ENCODE measurements at regions of chr1 and their contacts with region 1.

Region 1: GRCh38 chr1:244272471-244273261 is 179.0 kb downstream of the ADSS2 start:
- DNase-seq: peak; percentile 97
- H3K4me3 Mint-ChIP-seq: peak overlapping the region; percentile 65
- H3K27ac Mint-ChIP-seq: peak overlapping the region; percentile 52
- H3K4me1 Mint-ChIP-seq: peaks cover 32% of the 10 kb centered on the region
- H3K27me3 Mint-ChIP-seq: no peaks in the 10 kb centered on the region
- CTCF ChIP-seq: peak; percentile 100

Region 2: GRCh38 chr1:243701872-243702271 is 570.8 kb before region 1 on chr1:
- CTCF ChIA-PET with region 1: interaction called, 44 read pairs
- POLR2A ChIA-PET with region 1: interaction called, 7 read pairs
- intact Hi-C with region 1: no loop called
- DNase-seq: no peak
- H3K4me3 Mint-ChIP-seq: no peak overlapping the region
- H3K27ac Mint-ChIP-seq: no peak overlapping the region
- H3K4me1 Mint-ChIP-seq: no peaks in the 10 kb centered on the region
- H3K27me3 Mint-ChIP-seq: no peaks in the 10 kb centered on the region
- CTCF ChIP-seq: no peak

Region 3: GRCh38 chr1:243748706-243749283 is 523.9 kb before region 1 on chr1:
- CTCF ChIA-PET with region 1: interaction called, 28 read pairs
- POLR2A ChIA-PET with region 1: interaction called, 4 read pairs
- intact Hi-C with region 1: loop called (anchors 1 kb)
- DNase-seq: peak; percentile 87
- H3K4me3 Mint-ChIP-seq: no peak overlapping the region
- H3K27ac Mint-ChIP-seq: no peak overlapping the region
- H3K4me1 Mint-ChIP-seq: no peaks in the 10 kb centered on the region
- H3K27me3 Mint-ChIP-seq: no peaks in the 10 kb centered on the region
- CTCF ChIP-seq: peak; percentile 88

Region 4: DNA sequence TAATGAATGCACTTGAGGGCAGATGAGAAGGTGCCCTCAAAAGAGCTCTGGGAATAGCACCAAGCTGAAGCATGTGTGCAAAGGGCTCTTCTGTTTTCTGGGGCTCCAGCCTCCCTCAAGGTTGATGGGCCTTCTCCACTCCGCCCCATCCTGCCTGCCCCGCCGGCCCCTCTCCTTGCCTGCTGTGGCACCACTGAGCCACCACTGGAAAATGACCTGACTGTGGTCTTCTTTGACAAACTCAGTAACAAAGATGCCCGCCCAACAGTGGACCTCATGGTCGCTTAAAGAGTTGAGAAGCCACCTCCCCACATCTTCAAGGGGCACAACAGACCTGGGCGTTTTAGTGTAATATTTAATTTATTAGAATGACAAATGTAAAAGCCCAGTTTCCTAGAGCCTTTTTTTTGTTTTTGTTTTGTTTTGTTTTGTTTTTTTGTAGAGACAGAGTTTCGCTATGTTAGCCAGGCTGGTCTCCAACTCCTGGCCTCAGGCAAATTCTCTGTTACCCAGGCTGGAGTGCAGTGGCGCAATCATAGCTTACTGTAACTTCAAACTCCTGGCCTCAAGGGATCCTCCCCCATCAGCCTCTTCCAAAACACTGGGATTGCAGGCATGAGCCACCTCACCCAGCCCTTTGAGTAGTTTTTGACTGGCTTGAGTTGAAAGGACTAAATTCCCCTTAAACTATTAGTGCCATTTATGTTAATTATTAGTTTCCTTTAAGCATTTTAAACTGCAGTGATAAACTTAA is 250.5 kb before region 1 on chr1:
- CTCF ChIA-PET with region 1: interaction called, 7 read pairs
- POLR2A ChIA-PET with region 1: no interaction called
- intact Hi-C with region 1: loop called (anchors 2 kb)
- DNase-seq: peak; percentile 98
- H3K4me3 Mint-ChIP-seq: no peak overlapping the region
- H3K27ac Mint-ChIP-seq: peak overlapping the region; percentile 73
- H3K4me1 Mint-ChIP-seq: peaks cover 12% of the 10 kb centered on the region
- H3K27me3 Mint-ChIP-seq: peaks cover 6% of the 10 kb centered on the region
- CTCF ChIP-seq: no peak

Region 5: DNA sequence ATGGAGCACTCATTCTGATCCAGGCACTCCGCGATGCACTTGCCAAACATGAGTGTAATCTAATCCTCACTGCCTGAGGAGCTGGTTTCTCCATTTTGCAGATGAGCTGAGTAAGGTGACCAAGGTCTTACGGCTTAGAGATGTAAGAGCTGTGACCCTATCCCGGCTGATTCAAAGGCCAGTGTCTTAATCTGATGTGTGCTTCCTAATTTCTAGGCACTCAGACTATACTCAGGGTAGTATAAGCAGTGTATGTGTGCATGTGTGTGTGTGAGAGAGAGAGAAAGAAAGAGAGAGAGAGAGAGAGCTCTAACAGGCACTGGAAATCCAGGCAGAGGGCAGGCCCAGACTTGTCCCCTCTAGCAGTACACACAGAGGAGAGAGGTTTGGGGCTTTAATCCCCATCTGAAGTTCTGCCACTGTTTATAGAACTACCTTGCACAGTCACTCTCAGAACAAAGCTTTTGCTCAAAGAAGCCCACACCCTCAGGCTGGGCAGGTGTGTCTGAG is 33.4 kb before region 1 on chr1:
- CTCF ChIA-PET with region 1: interaction called, 14 read pairs
- POLR2A ChIA-PET with region 1: interaction called, 5 read pairs
- intact Hi-C with region 1: no loop called
- DNase-seq: peak; percentile 95
- H3K4me3 Mint-ChIP-seq: no peak overlapping the region
- H3K27ac Mint-ChIP-seq: peak overlapping the region; percentile 91
- H3K4me1 Mint-ChIP-seq: peaks cover 7% of the 10 kb centered on the region
- H3K27me3 Mint-ChIP-seq: no peaks in the 10 kb centered on the region
- CTCF ChIP-seq: no peak

Region 6: DNA sequence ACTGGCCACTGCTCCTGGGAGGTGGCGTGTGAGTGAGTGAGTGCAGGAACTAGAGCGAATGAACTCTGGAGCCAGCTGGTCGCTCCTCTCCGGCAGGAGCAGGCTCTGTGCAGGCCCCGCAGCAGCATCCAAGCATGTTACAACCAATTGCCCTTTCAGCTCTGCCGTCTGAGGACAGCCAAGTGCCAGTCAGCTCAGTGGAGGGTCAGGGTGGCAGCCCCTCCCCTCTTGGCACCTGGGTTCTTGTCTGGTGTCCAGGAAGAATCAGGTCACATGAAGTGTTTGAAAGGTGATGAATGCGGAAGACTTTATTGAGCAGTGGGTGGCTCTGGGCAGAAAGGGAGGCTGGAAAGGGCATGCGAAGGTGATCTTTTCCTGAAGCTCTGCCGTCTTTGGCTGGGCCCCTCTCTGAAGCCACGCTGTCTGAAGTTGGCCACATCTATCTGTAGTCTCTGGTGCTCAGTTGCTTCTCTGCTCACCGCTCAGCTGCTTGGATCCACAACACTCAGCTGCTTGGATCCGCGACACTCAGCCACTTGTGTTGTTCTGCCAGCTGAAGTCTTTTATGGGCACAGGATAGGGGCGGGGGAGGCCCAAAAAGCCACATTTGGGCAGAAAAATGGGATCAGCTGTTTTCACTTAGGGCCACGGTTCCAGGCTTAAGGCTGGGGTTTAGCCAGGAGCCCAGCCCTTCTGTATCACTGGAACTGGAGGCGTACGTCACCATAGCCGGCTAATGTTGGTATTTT is 39.3 kb after region 1 on chr1:
- CTCF ChIA-PET with region 1: interaction called, 10 read pairs
- POLR2A ChIA-PET with region 1: no interaction called
- intact Hi-C with region 1: no loop called
- DNase-seq: no peak
- H3K4me3 Mint-ChIP-seq: no peak overlapping the region
- H3K27ac Mint-ChIP-seq: no peak overlapping the region
- H3K4me1 Mint-ChIP-seq: no peaks in the 10 kb centered on the region
- H3K27me3 Mint-ChIP-seq: no peaks in the 10 kb centered on the region
- CTCF ChIP-seq: no peak

Region 7: DNA sequence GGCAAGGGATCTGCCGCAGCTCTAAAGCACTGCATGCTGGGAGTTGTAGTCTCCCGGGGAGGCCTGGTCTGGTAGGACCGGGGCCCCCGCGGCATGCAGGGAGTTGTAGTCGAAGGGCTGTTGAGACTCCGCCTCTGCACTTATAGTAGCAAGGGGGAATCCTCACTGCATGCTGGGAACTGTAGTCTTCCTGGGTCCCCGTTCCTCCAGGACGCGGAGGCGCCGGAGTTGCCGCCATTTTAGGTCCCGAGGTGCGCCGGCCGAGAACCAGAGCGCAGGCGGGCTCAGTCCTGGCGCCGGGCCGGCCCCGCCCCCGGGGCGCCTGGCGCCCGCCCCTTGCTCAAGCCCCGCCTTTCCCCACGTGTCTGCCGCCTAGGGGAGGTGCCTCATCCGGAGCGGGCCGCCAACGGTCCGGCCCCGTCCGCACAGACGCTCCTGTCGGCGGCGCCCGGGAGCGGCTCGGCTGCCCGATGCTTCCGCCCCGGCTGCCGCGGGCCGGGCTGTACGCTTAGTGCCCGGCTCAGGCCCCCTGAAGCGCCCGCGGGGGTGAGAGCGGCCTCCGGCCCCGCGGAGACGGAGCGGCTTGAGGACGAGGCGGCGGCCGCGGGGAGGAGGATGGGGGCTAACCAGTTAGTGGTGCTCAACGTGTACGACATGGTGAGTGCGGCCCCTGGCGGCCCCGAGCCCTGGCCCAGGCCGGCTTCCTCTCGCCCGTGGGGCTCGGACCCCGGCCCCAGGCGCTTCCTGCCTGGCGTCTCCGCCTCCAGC is 380.2 kb after region 1 on chr1 and contains the start of gene DESI2:
- CTCF ChIA-PET with region 1: no interaction called
- POLR2A ChIA-PET with region 1: no interaction called
- intact Hi-C with region 1: loop called (anchors 10 kb)
- DNase-seq: peak; percentile 100
- H3K4me3 Mint-ChIP-seq: no peak within 1 kb of the TSS
- H3K27ac Mint-ChIP-seq: peak within 1 kb of the TSS; percentile 63
- H3K4me1 Mint-ChIP-seq: peaks cover 17% of the 10 kb centered on the region
- H3K27me3 Mint-ChIP-seq: no peaks in the 10 kb centered on the region
- CTCF ChIP-seq: peak; percentile 86
- total RNA-seq, gene DESI2: 99.0 and 101 TPM in 2 replicates